ENCODE measurements at regions of chr1 and their contacts with region 1.

Region 1: DNA sequence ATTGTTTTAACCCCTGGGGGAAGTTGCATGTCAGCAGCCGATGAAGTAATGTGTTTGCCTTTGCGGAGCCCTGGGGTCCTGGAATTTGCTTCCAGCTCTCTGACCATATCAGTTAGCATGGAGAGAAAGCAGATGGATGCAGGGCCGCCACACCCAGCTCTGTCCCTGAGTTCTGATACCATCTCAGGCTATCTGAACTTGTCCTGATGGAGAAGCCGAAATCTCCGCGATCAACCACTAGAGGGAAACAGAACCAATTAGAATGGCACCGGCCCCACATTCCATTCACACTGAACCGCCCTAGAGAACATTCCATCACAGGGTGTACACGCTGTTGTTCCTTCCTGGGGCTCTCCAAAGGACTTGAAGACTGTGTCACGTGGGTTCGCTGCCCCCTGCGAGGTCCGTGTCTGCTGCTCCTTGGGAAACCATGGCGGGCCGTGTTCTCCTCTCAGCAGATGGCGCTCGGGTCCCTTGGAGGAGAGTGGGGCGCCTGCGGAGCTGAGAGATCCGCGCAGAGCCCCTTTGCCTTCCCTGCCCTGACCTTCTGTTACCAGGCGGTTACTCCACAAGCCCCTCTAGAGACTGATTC is 75.4 kb downstream of the ABCA4 start:
- DNase-seq: peak; percentile 86
- H3K4me3 ChIP-seq: no peak overlapping the region
- H3K27me3 ChIP-seq: no peaks in the 10 kb centered on the region
- CTCF ChIP-seq: peak; percentile 71

Region 2: DNA sequence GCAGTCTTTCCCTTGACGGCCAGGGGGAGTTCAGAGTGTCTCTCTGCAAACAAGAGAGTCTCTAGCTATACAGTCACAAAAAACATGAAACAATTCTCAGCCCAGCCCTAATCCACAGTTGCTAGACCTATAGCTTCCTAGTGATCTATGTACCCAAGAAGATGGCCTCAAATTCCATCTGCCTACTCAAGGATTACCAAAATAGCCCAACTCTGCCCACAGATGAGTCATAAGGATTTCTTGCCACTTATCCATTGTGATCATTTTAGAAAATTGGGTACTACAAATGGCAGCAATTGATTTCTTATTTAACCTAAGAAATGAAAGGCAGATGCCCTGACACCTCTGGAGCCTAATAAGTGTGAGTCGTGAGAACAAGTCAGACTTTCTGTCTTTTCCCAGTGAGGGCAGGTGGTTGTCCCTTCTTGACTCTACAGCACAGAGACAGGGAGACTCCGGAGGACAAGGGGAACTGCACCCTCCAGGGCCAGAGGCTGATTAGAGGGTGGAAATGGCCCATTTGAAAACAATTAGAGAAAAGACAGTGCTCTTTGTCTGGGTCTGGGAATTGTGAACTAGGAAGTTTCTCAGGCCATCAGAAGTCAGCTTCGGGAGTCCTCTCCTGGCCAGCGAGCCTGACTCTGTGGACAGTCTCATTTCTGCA is 10.0 kb after region 1 on chr1:
- CTCF ChIA-PET with region 1: interaction called, 34 read pairs
- POLR2A ChIA-PET with region 1: no interaction called
- DNase-seq: no peak
- H3K4me3 ChIP-seq: no peak overlapping the region
- H3K27me3 ChIP-seq: no peaks in the 10 kb centered on the region
- CTCF ChIP-seq: no peak

Region 3: GRCh38 chr1:94237291-94238226 is 192.0 kb after region 1 on chr1 and contains the start of gene ARHGAP29:
- CTCF ChIA-PET with region 1: interaction called, 13 read pairs
- POLR2A ChIA-PET with region 1: no interaction called
- DNase-seq: no peak
- H3K4me3 ChIP-seq: peak within 1 kb of the TSS; percentile 95
- H3K27me3 ChIP-seq: no peaks in the 10 kb centered on the region
- CTCF ChIP-seq: no peak
- polyA plus RNA-seq, gene ARHGAP29: 21.5 and 40.4 TPM in 2 replicates